Pancreas (tissue), 10 donors: ENCODE measurements at regions of chr7 and their contacts with region 1.

Region 1: GRCh38 chr7:20395511-20395910 is 64.8 kb downstream of the ITGB8 start:
- DNase-seq: no peak
- ATAC-seq: no peak
- H3K4me3 ChIP-seq: no peak overlapping the region
- H3K27ac ChIP-seq: no peak overlapping the region
- H3K4me1 ChIP-seq: peaks cover 1 to 17% (median 16%) of the 10 kb centered on the region in 3 donors
- H3K27me3 ChIP-seq: no peaks in the 10 kb centered on the region
- CTCF ChIP-seq: no peak

Region 2: GRCh38 chr7:20330240-20330927 is 65.1 kb before region 1 on chr7 and contains the start of gene ITGB8:
- intact Hi-C with region 1: loop called in 1 of 3 experiments (anchors 10 kb)
- DNase-seq: peak; percentile 83 to 91 (median 86)
- ATAC-seq: peak; percentile 83 to 91 (median 84)
- H3K4me3 ChIP-seq: peak within 1 kb of the TSS; percentile 49 to 81 (median 54)
- H3K27ac ChIP-seq: peak within 1 kb of the TSS; percentile 93 to 97 (median 96)
- H3K4me1 ChIP-seq: peaks cover 0 to 15% (median 3%) of the 10 kb centered on the region in 3 donors
- H3K27me3 ChIP-seq: no peaks in the 10 kb centered on the region
- CTCF ChIP-seq: no peak
- total RNA-seq, gene ITGB8: 10.3 to 39.8 (median 14.3) TPM

Region 3: GRCh38 chr7:20484356-20484755 is 88.8 kb after region 1 on chr7:
- intact Hi-C with region 1: no loop called
- DNase-seq: no peak
- ATAC-seq: no peak
- H3K4me3 ChIP-seq: no peak overlapping the region
- H3K27ac ChIP-seq: no peak overlapping the region
- H3K4me1 ChIP-seq: no peaks in the 10 kb centered on the region
- H3K27me3 ChIP-seq: no peaks in the 10 kb centered on the region
- CTCF ChIP-seq: no peak

Region 4: GRCh38 chr7:20598459-20599309 is 203.2 kb after region 1 on chr7:
- intact Hi-C with region 1: no loop called
- DNase-seq: no peak
- ATAC-seq: peak; percentile 78 to 91 (median 88)
- H3K4me3 ChIP-seq: no peak overlapping the region
- H3K27ac ChIP-seq: no peak overlapping the region
- H3K4me1 ChIP-seq: no peaks in the 10 kb centered on the region
- H3K27me3 ChIP-seq: no peaks in the 10 kb centered on the region
- CTCF ChIP-seq: peak; percentile 34 to 84 (median 66)